Heart left ventricle (tissue), 16 donors: ENCODE measurements at regions of chr2 and their contacts with region 1.

Region 1: DNA sequence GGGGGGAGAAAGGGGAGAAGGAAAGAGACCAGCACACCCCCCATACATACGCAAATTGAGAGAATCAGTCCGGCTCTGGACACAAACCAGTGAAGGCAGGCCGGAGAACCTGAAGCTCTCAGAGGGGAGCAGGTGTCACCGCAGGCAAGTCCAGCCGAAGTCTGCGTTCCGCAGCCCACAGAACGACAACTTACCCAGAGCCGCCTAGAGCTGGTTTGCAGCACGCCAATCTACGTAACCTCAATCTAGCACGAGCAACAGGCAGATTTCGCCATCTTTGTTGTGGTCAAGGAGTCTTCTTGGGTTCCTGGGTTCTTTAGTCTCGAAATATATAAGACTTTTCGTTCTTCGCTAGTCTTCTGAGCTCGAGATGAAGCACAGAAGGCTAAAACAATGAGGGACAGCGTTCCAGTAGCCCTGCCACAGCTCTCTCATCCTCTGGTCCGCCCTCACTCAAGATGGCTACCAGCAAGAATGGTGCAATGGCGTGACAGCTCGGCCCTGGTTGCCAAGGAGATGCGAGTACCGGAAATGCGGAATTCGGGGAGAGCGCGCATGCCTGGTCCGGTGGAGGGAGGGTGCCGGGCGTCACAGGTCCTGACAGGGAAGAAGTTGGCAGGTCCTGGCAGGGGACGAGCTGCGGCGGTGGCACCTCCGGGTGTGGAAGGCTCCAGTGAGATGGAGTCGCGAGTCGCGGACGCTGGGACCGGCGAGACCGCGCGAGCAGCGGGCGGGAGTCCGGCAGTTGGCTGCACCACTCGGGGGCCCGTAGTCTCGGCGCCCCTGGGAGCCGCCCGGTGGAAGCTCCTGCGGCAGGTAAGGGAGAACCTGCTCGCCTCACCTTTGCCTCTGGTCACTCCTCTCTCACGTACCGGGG is at the starts of genes CAMKMT and PREPL:
- DNase-seq: peak; percentile 98 to 99 (median 99)
- ATAC-seq: peak; percentile 96 to 98 (median 96)
- H3K4me3 ChIP-seq: peak within 1 kb of the TSS; percentile 60 to 97 (median 89)
- H3K27ac ChIP-seq: peak within 1 kb of the TSS; percentile 89 to 99 (median 96)
- H3K4me1 ChIP-seq: peaks cover 0 to 45% (median 32%) of the 10 kb centered on the region in 12 donors
- H3K27me3 ChIP-seq: no peaks in the 10 kb centered on the region
- CTCF ChIP-seq: no peak
- POLR2A ChIP-seq: peak in 1 of 2 donors; percentile 50
- total RNA-seq, gene CAMKMT: 2.5 to 10.1 (median 4.3) TPM
- total RNA-seq, gene PREPL: 62.4 to 120 (median 73.9) TPM

Region 2: DNA sequence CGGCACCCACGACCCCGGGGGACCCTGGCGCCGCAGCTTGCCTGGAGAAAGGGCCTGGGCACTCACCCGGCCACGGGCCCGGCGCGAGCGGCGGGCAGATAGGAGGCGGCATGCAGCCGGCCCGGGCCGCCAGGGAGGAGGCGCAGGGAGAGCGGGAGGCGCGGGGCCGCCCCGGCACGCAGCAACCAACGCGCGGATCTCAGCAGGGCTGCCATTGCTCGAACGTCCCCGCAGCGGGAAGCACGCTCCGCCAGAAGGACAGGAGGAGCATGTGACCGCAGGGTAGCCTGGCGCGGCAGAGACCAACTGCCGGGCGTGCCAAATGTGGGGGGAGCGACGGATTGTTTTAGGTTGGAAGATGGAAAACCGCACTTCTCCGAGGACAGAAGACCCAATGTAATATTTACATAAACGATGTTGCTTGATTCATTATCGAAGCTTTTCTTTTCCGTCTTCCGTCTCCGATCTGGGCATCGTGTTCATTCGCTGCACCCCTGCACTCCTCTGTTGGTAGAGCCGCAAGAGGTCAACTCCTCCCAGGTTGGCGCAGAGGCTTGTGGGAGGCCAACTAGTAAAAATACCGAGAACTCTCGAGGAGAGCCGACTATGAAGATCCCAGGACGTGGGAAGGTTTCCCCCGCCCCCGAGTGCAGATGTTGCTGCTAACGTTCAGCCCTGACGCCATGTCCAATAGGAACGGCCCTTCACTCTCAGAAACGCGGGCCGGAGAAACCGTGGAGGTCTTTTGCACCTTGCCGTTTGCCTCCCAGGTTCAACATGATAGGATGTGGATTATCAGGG is 365.6 kb before region 1 on chr2 and contains the start of gene LRPPRC:
- intact Hi-C with region 1: loop called in 1 of 10 experiments (anchors 5 kb)
- DNase-seq: peak; percentile 93 to 96 (median 94)
- ATAC-seq: peak; percentile 98 to 99 (median 98)
- H3K4me3 ChIP-seq: peak within 1 kb of the TSS; percentile 65 to 100 (median 97)
- H3K27ac ChIP-seq: peak within 1 kb of the TSS; percentile 55 to 89 (median 80)
- H3K4me1 ChIP-seq: peaks cover 8 to 32% (median 21%) of the 10 kb centered on the region in 12 donors
- H3K27me3 ChIP-seq: no peaks in the 10 kb centered on the region
- CTCF ChIP-seq: no peak
- POLR2A ChIP-seq: peak; percentile 35 to 86
- total RNA-seq, gene LRPPRC: 58.5 to 117 (median 90.8) TPM

Region 3: GRCh38 chr2:44167940-44168680 is 193.5 kb before region 1 on chr2:
- intact Hi-C with region 1: loop called in 3 of 10 experiments (anchors 1 to 2 kb)
- DNase-seq: peak; percentile 96 to 100 (median 99)
- ATAC-seq: peak; percentile 93 to 95 (median 94)
- H3K4me3 ChIP-seq: peak overlapping the region; percentile 18 to 87 (median 58)
- H3K27ac ChIP-seq: peak overlapping the region; percentile 90 to 98 (median 94)
- H3K4me1 ChIP-seq: peaks cover 0 to 34% (median 20%) of the 10 kb centered on the region in 12 donors
- H3K27me3 ChIP-seq: no peaks in the 10 kb centered on the region
- CTCF ChIP-seq: no peak
- POLR2A ChIP-seq: peak in 1 of 2 donors; percentile 47

Region 4: GRCh38 chr2:45283764-45284620 is 922.4 kb after region 1 on chr2:
- intact Hi-C with region 1: no loop called
- DNase-seq: no peak
- ATAC-seq: peak in 3 of 4 donors; percentile 55 to 73 (median 62)
- H3K4me3 ChIP-seq: no peak overlapping the region
- H3K27ac ChIP-seq: no peak overlapping the region
- H3K4me1 ChIP-seq: no peaks in the 10 kb centered on the region
- H3K27me3 ChIP-seq: no peaks in the 10 kb centered on the region
- CTCF ChIP-seq: no peak
- POLR2A ChIP-seq: no peak